ENCODE measurements at regions of chr1 and their contacts with region 1.

Region 1: GRCh38 chr1:206612129-206612876 is at the start of gene EIF2D:
- DNase-seq: peak; percentile 88 to 98 (median 94)
- ATAC-seq: peak; percentile 100
- H3K4me3 ChIP-seq: peak within 1 kb of the TSS; percentile 97
- H3K4me3 Mint-ChIP-seq: peak within 1 kb of the TSS; percentile 89 to 95 (median 93)
- H3K27ac ChIP-seq: peak within 1 kb of the TSS; percentile 88
- H3K27ac Mint-ChIP-seq: peak within 1 kb of the TSS; percentile 92 to 99 (median 94)
- H3K4me1 ChIP-seq: peaks cover 8 to 10% of the 10 kb centered on the region in 2 donors
- H3K4me1 Mint-ChIP-seq: peaks cover 7 to 35% (median 30%) of the 10 kb centered on the region in 7 donors
- H3K27me3 ChIP-seq: no peaks in the 10 kb centered on the region
- H3K27me3 Mint-ChIP-seq: peaks cover 0 to 17% (median 0%) of the 10 kb centered on the region in 5 donors
- total RNA-seq, gene EIF2D: 38.7 to 73.0 (median 59.6) TPM

Region 2: GRCh38 chr1:204806943-204807687 is 1805.2 kb before region 1 on chr1:
- CTCF ChIA-PET with region 1: no interaction called
- POLR2A ChIA-PET with region 1: no interaction called
- intact Hi-C with region 1: loop called in 1 of 2 experiments (anchors 10 kb)
- DNase-seq: peak; percentile 74 to 93 (median 85)
- ATAC-seq: peak; percentile 97
- H3K4me3 ChIP-seq: peak overlapping the region; percentile 76
- H3K4me3 Mint-ChIP-seq: peak overlapping the region; percentile 40 to 97 (median 88)
- H3K27ac ChIP-seq: no peak overlapping the region
- H3K27ac Mint-ChIP-seq: peak overlapping the region; percentile 40 to 81 (median 63)
- H3K4me1 ChIP-seq: no peaks in the 10 kb centered on the region
- H3K4me1 Mint-ChIP-seq: peaks cover 0 to 22% (median 15%) of the 10 kb centered on the region in 7 donors
- H3K27me3 ChIP-seq: no peaks in the 10 kb centered on the region
- H3K27me3 Mint-ChIP-seq: peaks cover 0 to 28% (median 0%) of the 10 kb centered on the region in 5 donors

Region 3: DNA sequence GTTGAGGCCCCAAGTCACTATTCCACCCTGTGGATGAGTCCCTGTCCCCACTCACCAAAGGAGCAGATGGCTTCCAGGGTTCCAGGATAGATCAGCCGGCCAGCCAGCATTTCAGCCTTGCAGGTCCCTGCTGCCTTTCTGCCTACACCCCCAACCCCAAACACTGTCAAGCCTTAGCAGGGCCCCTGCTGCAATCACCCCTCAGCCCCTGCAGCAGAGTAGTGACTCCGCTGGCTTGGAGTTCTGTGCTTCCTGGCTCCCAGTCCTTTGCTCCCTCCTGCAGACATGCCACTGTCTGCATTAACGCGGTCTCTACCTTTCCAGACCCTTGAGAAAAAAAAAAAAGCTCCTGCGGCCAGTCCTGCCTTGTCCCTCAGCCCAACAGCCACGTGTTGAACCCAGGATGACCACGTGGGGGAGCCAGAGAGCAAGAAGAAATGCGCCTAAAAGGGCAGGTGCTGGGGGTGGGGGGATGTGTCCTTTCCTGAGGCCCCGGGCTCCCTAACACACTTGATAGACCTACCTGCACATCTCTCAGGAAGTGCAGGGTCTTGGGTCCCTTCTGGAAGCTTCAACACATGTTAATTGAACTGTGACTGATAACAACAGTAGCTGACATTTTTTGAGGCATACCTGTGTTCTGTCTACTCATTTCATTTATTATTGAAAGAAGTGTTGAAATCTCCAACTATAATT is 67.6 kb before region 1 on chr1:
- CTCF ChIA-PET with region 1: interaction called, 6 read pairs
- POLR2A ChIA-PET with region 1: interaction called, 4 read pairs
- intact Hi-C with region 1: loop called in 1 of 2 experiments (anchors 1 kb)
- DNase-seq: peak; percentile 58 to 86 (median 77)
- ATAC-seq: peak; percentile 94
- H3K4me3 ChIP-seq: no peak overlapping the region
- H3K4me3 Mint-ChIP-seq: no peak overlapping the region
- H3K27ac ChIP-seq: no peak overlapping the region
- H3K27ac Mint-ChIP-seq: peak overlapping the region in 7 of 9 donors; percentile 17 to 63 (median 49)
- H3K4me1 ChIP-seq: peaks cover 4 to 9% of the 10 kb centered on the region in 2 donors
- H3K4me1 Mint-ChIP-seq: peaks cover 12 to 26% (median 19%) of the 10 kb centered on the region in 7 donors
- H3K27me3 ChIP-seq: no peaks in the 10 kb centered on the region
- H3K27me3 Mint-ChIP-seq: no peaks in the 10 kb centered on the region

Region 4: DNA sequence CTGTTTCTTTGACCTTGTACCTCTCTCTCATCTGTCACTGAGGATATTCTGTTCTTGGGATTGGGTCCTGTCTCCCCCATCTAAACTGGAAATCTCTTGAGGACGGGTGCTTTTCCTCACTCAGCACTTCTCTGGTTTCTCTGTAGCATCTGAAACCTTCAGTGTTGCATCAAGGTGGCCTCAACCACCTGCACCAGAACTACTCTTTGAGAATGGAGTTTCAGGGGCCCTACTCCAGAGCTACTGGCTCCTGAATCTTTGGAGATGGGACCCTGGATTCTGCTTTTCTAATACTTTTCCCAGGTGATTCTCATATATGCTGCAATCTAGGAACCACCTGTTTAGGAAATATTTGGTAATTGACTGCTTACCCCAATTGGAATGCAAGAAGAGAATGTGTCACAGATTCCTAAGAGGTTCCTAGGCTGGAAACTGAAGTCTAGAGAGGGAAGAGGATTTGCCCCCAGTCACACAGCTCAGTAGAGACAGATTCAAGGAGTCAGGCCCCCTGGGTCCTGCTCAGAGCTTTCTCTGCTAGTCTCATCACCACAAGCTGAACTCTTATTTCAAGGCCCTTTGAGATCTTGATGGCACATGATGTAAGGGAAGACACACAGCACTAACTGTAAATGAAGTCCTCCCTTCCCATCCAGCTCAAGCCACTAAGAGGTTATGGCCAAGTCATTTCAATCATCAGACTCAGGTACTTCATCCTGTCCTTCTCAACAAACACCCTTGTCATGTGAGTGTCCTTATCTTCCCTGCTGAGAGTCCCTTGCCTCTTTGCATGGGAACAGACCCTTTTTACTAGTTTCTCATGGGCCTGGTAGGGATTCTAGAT is 48.7 kb before region 1 on chr1:
- CTCF ChIA-PET with region 1: interaction called, 9 read pairs
- POLR2A ChIA-PET with region 1: interaction called, 4 read pairs
- intact Hi-C with region 1: loop called in 1 of 2 experiments (anchors 1 kb)
- DNase-seq: no peak
- ATAC-seq: peak; percentile 6
- H3K4me3 ChIP-seq: peak overlapping the region; percentile 44
- H3K4me3 Mint-ChIP-seq: peak overlapping the region; percentile 77 to 99 (median 87)
- H3K27ac ChIP-seq: peak overlapping the region; percentile 90
- H3K27ac Mint-ChIP-seq: peak overlapping the region; percentile 86 to 100 (median 92)
- H3K4me1 ChIP-seq: peaks cover 88 to 90% of the 10 kb centered on the region in 2 donors
- H3K4me1 Mint-ChIP-seq: peaks cover 75 to 96% (median 91%) of the 10 kb centered on the region in 7 donors
- H3K27me3 ChIP-seq: no peaks in the 10 kb centered on the region
- H3K27me3 Mint-ChIP-seq: no peaks in the 10 kb centered on the region

Region 5: GRCh38 chr1:206635080-206635977 is 23.0 kb after region 1 on chr1 and contains the start of gene DYRK3:
- CTCF ChIA-PET with region 1: interaction called, 4 read pairs
- POLR2A ChIA-PET with region 1: interaction called, 4 read pairs
- intact Hi-C with region 1: loop called (anchors 1 kb)
- DNase-seq: peak; percentile 71 to 98 (median 80)
- ATAC-seq: peak; percentile 97
- H3K4me3 ChIP-seq: peak within 1 kb of the TSS; percentile 67
- H3K4me3 Mint-ChIP-seq: peak within 1 kb of the TSS; percentile 85 to 96 (median 90)
- H3K27ac ChIP-seq: peak within 1 kb of the TSS; percentile 57
- H3K27ac Mint-ChIP-seq: peak within 1 kb of the TSS; percentile 64 to 93 (median 85)
- H3K4me1 ChIP-seq: peaks cover 8 to 16% of the 10 kb centered on the region in 2 donors
- H3K4me1 Mint-ChIP-seq: peaks cover 14 to 29% (median 18%) of the 10 kb centered on the region in 7 donors
- H3K27me3 ChIP-seq: no peaks in the 10 kb centered on the region
- H3K27me3 Mint-ChIP-seq: peaks cover 7 to 13% (median 9%) of the 10 kb centered on the region in 5 donors
- total RNA-seq, gene DYRK3: 0.22 to 8.2 (median 0.69) TPM

Region 6: GRCh38 chr1:206803221-206803730 is 191.0 kb after region 1 on chr1:
- CTCF ChIA-PET with region 1: no interaction called
- POLR2A ChIA-PET with region 1: no interaction called
- intact Hi-C with region 1: loop called in 1 of 2 experiments (anchors 1 kb)
- DNase-seq: peak; percentile 42 to 96 (median 93)
- ATAC-seq: peak; percentile 97
- H3K4me3 ChIP-seq: no peak overlapping the region
- H3K4me3 Mint-ChIP-seq: peak overlapping the region in 9 of 10 donors; percentile 32 to 71 (median 57)
- H3K27ac ChIP-seq: peak overlapping the region; percentile 81
- H3K27ac Mint-ChIP-seq: peak overlapping the region; percentile 83 to 99 (median 95)
- H3K4me1 ChIP-seq: peaks cover 34 to 41% of the 10 kb centered on the region in 2 donors
- H3K4me1 Mint-ChIP-seq: peaks cover 29 to 78% (median 77%) of the 10 kb centered on the region in 7 donors
- H3K27me3 ChIP-seq: no peaks in the 10 kb centered on the region
- H3K27me3 Mint-ChIP-seq: peaks cover 0 to 44% (median 0%) of the 10 kb centered on the region in 5 donors

Measured in naive thymus-derived CD4-positive, alpha-beta T cell (primary cell).